BJ (cell line): ENCODE measurements at regions of chr5 and their contacts with region 1.

Region 1: GRCh38 chr5:98391921-98392625 is 381.4 kb upstream of the RGMB start:
- DNase-seq: no peak
- H3K4me3 ChIP-seq: no peak overlapping the region
- H3K27me3 ChIP-seq: no peaks in the 10 kb centered on the region
- CTCF ChIP-seq: no peak

Region 2: GRCh38 chr5:97056263-97056662 is 1335.8 kb before region 1 on chr5:
- CTCF ChIA-PET with region 1: no interaction called
- POLR2A ChIA-PET with region 1: interaction called, 15 read pairs
- DNase-seq: no peak
- H3K4me3 ChIP-seq: no peak overlapping the region
- H3K27me3 ChIP-seq: peaks cover 4% of the 10 kb centered on the region
- CTCF ChIP-seq: no peak

Region 3: DNA sequence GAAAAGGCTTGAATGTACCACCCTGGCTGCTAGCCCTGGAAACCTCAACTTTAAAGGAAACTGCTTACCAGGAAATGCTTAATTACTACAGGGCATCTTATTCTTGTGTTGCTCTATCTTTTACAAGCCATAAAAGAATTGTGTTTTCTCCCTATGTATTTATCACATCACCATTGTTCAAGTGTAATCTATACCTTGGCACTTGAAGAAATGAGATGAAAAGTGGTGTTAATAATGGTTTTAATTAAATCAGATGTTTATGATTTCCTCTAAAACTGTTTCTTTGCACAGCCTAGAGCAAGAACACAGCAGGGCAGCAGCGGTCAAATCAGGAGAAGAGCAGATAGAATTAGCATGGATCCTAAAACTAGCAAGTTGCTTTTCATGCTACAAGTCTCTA is 249.6 kb after region 1 on chr5:
- CTCF ChIA-PET with region 1: no interaction called
- POLR2A ChIA-PET with region 1: no interaction called
- DNase-seq: no peak
- H3K4me3 ChIP-seq: no peak overlapping the region
- H3K27me3 ChIP-seq: no peaks in the 10 kb centered on the region
- CTCF ChIP-seq: no peak